Caco-2 (cell line): ENCODE measurements at regions of chr3 and their contacts with region 1.

Region 1: GRCh38 chr3:158790901-158791589 is 10.8 kb upstream of the MFSD1 start:
- DNase-seq: peak; percentile 44 to 58
- H3K4me3 ChIP-seq: no peak overlapping the region
- H3K4me3 Mint-ChIP-seq: peak overlapping the region; percentile 55
- H3K27ac Mint-ChIP-seq: no peak overlapping the region
- H3K4me1 ChIP-seq: 0 out of 2 replicates have a peak, but pooled peaks cover 4% of the 10 kb centered on the region
- H3K4me1 Mint-ChIP-seq: peaks cover 6% of the 10 kb centered on the region
- H3K27me3 ChIP-seq: no peaks in the 10 kb centered on the region
- H3K27me3 Mint-ChIP-seq: peaks cover 3% of the 10 kb centered on the region
- CTCF ChIP-seq: peak; percentile 73 to 76

Region 2: DNA sequence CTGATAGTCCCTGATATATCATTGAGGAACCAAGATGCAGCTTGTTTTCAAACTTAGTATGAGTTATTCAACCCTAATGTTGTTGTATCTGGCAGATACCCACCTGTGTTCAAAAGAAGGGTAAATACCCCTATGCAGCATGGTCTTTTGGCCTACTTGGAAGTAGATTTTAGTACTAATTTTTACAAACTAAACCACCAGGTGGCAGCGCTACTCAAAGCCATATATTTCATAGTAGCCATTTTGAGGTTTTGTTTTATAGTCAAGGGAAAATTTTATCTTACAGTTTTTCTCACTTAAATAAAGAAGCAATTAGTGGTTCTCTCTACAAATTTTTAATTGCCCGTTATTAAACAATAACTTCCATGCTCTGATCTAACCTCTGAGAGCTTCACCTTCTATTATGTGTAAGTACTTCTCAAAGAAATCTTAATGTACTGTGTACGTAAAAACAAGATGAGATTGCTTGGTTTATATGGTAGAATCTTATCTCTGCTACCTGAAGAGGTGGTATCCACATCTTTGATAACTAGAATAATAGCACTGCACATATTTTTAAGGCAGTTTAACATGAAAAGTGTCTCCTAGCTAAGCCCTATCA is 251.5 kb before region 1 on chr3:
- CTCF ChIA-PET with region 1: interaction called, 3 read pairs
- POLR2A ChIA-PET with region 1: no interaction called
- intact Hi-C with region 1: loop called (anchors 1 kb)
- DNase-seq: peak in 1 of 2 experiments; percentile 55
- H3K4me3 ChIP-seq: no peak overlapping the region
- H3K4me3 Mint-ChIP-seq: no peak overlapping the region
- H3K27ac Mint-ChIP-seq: no peak overlapping the region
- H3K4me1 ChIP-seq: no peaks in the 10 kb centered on the region
- H3K4me1 Mint-ChIP-seq: no peaks in the 10 kb centered on the region
- H3K27me3 ChIP-seq: no peaks in the 10 kb centered on the region
- H3K27me3 Mint-ChIP-seq: no peaks in the 10 kb centered on the region
- CTCF ChIP-seq: peak; percentile 48 to 66

Region 3: GRCh38 chr3:158659454-158660237 is 131.4 kb before region 1 on chr3:
- CTCF ChIA-PET with region 1: interaction called, 22 read pairs
- POLR2A ChIA-PET with region 1: no interaction called
- intact Hi-C with region 1: loop called (anchors 1 kb)
- DNase-seq: peak; percentile 46 to 48
- H3K4me3 ChIP-seq: no peak overlapping the region
- H3K4me3 Mint-ChIP-seq: no peak overlapping the region
- H3K27ac Mint-ChIP-seq: no peak overlapping the region
- H3K4me1 ChIP-seq: no peaks in the 10 kb centered on the region
- H3K4me1 Mint-ChIP-seq: peaks cover 6% of the 10 kb centered on the region
- H3K27me3 ChIP-seq: no peaks in the 10 kb centered on the region
- H3K27me3 Mint-ChIP-seq: no peaks in the 10 kb centered on the region
- CTCF ChIP-seq: peak; percentile 50 to 59

Region 4: GRCh38 chr3:158672293-158673176 is 118.5 kb before region 1 on chr3 and contains the start of gene LXN:
- CTCF ChIA-PET with region 1: no interaction called
- POLR2A ChIA-PET with region 1: no interaction called
- intact Hi-C with region 1: loop called (anchors 2 kb)
- DNase-seq: peak; percentile 60 to 64
- H3K4me3 ChIP-seq: no peak within 1 kb of the TSS
- H3K4me3 Mint-ChIP-seq: no peak within 1 kb of the TSS
- H3K27ac Mint-ChIP-seq: no peak within 1 kb of the TSS
- H3K4me1 ChIP-seq: no peaks in the 10 kb centered on the region
- H3K4me1 Mint-ChIP-seq: no peaks in the 10 kb centered on the region
- H3K27me3 ChIP-seq: no peaks in the 10 kb centered on the region
- H3K27me3 Mint-ChIP-seq: no peaks in the 10 kb centered on the region
- CTCF ChIP-seq: peak; percentile 17 to 54
- total RNA-seq, gene LXN: not detected in 2 replicates

Region 5: GRCh38 chr3:158727206-158728060 is 63.6 kb before region 1 on chr3:
- CTCF ChIA-PET with region 1: interaction called, 72 read pairs
- POLR2A ChIA-PET with region 1: no interaction called
- intact Hi-C with region 1: loop called (anchors 1 kb)
- DNase-seq: peak; percentile 46 to 63
- H3K4me3 ChIP-seq: no peak overlapping the region
- H3K4me3 Mint-ChIP-seq: no peak overlapping the region
- H3K27ac Mint-ChIP-seq: no peak overlapping the region
- H3K4me1 ChIP-seq: 0 out of 2 replicates have a peak, but pooled peaks cover 3% of the 10 kb centered on the region
- H3K4me1 Mint-ChIP-seq: no peaks in the 10 kb centered on the region
- H3K27me3 ChIP-seq: no peaks in the 10 kb centered on the region
- H3K27me3 Mint-ChIP-seq: no peaks in the 10 kb centered on the region
- CTCF ChIP-seq: peak; percentile 70 to 72

Region 6: DNA sequence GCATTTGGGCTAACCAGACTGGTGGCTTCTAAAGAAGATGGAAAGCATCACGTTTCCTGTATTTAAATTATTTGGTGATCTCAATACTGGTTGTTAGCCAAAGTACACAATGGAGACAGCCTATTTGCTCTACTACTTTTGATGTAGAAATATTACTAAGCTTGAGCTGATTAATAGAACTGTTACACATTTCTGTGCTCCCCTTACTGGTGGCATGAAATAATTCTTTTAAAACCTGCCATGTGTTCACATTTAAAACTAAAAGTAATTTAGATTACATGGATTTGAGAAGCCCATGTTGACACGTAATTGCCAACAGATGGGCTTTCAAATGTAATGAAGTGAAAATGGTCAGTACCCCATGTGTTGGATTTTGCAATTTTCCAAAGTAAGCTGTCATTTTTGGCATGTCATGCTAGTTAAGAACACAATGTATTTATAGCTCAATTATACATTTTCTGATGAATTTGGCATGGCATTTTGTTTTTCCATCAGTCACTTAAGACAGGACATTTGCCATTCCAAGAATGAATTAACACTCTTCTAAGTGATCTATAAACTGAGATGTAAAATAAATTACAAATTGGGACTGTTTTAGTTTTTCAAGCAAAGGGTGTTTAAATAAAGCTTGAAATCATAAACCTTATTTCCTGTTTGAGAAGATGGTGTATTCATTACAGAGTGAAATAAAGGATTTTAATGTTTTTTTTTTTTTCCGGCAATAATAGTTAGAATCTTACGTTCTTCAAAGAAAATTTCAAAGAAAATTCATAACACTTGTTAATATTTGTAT is 48.0 kb before region 1 on chr3:
- CTCF ChIA-PET with region 1: no interaction called
- POLR2A ChIA-PET with region 1: no interaction called
- intact Hi-C with region 1: no loop called
- DNase-seq: no peak
- H3K4me3 ChIP-seq: no peak overlapping the region
- H3K4me3 Mint-ChIP-seq: no peak overlapping the region
- H3K27ac Mint-ChIP-seq: no peak overlapping the region
- H3K4me1 ChIP-seq: no peaks in the 10 kb centered on the region
- H3K4me1 Mint-ChIP-seq: no peaks in the 10 kb centered on the region
- H3K27me3 ChIP-seq: no peaks in the 10 kb centered on the region
- H3K27me3 Mint-ChIP-seq: no peaks in the 10 kb centered on the region
- CTCF ChIP-seq: no peak

Region 7: GRCh38 chr3:158768881-158769543 is 22.0 kb before region 1 on chr3:
- CTCF ChIA-PET with region 1: no interaction called
- POLR2A ChIA-PET with region 1: no interaction called
- intact Hi-C with region 1: loop called (anchors 1 kb)
- DNase-seq: peak; percentile 71 to 77
- H3K4me3 ChIP-seq: no peak overlapping the region
- H3K4me3 Mint-ChIP-seq: peak overlapping the region; percentile 52
- H3K27ac Mint-ChIP-seq: peak overlapping the region; percentile 25
- H3K4me1 ChIP-seq: peaks cover 57% of the 10 kb centered on the region
- H3K4me1 Mint-ChIP-seq: peaks cover 56% of the 10 kb centered on the region
- H3K27me3 ChIP-seq: no peaks in the 10 kb centered on the region
- H3K27me3 Mint-ChIP-seq: no peaks in the 10 kb centered on the region
- CTCF ChIP-seq: no peak

Region 8: DNA sequence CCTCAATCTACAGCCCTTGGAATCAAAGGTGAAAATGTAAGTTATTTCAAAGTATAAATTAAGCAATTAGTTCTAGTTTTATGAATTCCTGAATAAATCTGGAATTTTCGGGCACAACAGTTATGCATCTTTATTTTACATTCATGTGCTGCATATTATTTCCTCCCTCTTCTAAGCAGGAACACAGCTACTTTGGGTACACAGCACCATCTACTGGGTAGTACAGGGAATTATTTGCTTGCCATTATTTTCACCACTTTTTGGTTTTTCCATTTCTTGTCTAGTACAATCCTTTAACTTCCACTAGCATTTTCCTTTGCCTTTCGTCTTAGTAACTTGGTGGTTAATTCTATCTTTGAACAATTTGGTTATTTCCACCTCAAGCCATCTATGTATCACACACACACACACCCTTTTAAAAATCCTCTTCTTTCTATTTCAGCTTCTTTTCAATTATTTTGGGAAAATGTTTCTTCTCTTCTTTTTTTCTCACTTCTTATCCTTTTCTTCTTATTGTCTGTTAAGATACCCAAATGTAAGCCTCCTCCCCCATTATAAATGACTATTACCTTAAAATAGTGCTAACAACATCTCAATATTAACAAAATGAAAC is 461.8 kb after region 1 on chr3:
- CTCF ChIA-PET with region 1: no interaction called
- POLR2A ChIA-PET with region 1: no interaction called
- intact Hi-C with region 1: loop called (anchors 2 kb)
- DNase-seq: peak in 1 of 2 experiments; percentile 11
- H3K4me3 ChIP-seq: no peak overlapping the region
- H3K4me3 Mint-ChIP-seq: no peak overlapping the region
- H3K27ac Mint-ChIP-seq: no peak overlapping the region
- H3K4me1 ChIP-seq: no peaks in the 10 kb centered on the region
- H3K4me1 Mint-ChIP-seq: no peaks in the 10 kb centered on the region
- H3K27me3 ChIP-seq: no peaks in the 10 kb centered on the region
- H3K27me3 Mint-ChIP-seq: peaks cover 10% of the 10 kb centered on the region
- CTCF ChIP-seq: peak in 1 of 2 experiments; percentile 48